ENCODE measurements at regions of chr2 and their contacts with region 1.

Region 1: DNA sequence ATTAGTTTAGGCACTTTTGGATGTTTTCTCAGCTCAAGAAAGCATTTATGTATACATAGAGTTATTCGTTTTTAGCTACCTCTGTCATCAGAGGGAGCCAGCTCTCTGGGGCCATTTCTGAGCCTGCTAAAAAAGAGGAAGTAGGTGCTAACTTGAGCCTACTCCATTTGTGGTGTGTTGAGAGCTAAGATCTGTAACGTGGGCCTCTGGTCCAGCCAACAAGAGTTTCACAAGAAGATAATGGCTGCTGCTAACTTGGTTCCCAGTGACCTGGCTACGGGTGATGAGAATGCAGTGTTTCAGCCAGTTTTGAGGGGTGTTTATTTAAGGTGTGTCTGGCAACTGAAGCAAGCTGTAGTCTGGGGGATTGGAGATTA is 182.5 kb downstream of the PRKCE start:
- DNase-seq: peak; percentile 71
- CTCF ChIP-seq: peak; percentile 21

Region 2: GRCh38 chr2:45643543-45644542 is 190.1 kb before region 1 on chr2:
- CTCF ChIA-PET with region 1: interaction called, 10 read pairs
- POLR2A ChIA-PET with region 1: no interaction called
- DNase-seq: peak; percentile 90
- CTCF ChIP-seq: peak; percentile 95

Region 3: DNA sequence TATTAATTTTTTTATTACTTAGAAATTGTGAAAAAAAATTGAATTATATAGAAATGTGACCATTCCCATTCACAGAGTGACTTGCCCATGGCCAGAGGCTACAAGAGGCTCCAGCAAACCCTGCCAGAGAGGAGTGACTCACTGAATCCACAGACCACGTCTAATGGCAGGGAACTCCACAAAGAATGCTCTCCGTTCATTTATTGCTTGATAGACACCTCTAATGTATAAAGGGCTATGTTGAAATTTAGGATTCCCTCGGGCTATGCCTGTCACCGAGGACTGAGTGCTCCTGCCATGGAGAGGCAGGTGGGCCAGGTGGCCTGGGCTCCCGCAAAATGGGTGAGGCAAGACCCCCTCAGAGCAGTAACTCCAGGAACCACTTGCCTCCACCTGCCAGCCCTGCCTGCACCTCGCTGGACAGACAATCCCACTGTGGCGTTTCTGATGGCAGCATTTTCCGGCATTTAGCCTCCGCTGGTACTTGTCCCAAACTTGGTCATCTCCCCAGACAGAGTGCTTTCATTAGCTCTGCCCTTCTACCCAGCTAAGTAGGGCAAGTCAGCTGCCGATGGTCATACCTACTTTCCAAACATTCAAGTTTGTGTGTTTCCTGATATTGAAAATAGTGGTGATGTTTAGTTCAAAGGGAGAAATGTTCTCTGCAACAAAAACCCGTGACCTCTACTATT is 17.8 kb after region 1 on chr2:
- CTCF ChIA-PET with region 1: interaction called, 30 read pairs
- POLR2A ChIA-PET with region 1: no interaction called
- DNase-seq: no peak
- CTCF ChIP-seq: no peak

Region 4: DNA sequence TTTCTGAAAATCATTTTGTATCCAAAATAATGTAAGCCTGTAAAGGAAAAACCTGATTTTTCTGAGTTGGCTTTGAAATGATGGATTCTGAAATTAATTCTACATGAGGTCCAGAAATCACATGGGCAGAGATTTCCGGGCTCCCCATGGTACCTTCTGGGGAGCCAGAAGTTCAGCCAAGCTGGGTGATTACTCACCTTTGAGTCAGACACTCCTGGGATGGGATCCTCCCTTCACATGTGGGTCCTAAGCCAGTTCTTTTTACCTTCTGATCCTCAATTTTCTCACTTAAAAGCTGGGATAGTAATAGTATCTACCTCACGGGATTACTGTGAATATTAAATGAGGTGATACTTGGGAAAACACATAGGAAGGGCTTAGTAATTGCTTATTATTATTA is 283.4 kb after region 1 on chr2:
- CTCF ChIA-PET with region 1: no interaction called
- POLR2A ChIA-PET with region 1: no interaction called
- DNase-seq: no peak
- CTCF ChIP-seq: no peak

Measured in GM10248 (cell line).